Esophagus muscularis mucosa (tissue), 4 donors: ENCODE measurements at regions of chr3 and their contacts with region 1.

Region 1: DNA sequence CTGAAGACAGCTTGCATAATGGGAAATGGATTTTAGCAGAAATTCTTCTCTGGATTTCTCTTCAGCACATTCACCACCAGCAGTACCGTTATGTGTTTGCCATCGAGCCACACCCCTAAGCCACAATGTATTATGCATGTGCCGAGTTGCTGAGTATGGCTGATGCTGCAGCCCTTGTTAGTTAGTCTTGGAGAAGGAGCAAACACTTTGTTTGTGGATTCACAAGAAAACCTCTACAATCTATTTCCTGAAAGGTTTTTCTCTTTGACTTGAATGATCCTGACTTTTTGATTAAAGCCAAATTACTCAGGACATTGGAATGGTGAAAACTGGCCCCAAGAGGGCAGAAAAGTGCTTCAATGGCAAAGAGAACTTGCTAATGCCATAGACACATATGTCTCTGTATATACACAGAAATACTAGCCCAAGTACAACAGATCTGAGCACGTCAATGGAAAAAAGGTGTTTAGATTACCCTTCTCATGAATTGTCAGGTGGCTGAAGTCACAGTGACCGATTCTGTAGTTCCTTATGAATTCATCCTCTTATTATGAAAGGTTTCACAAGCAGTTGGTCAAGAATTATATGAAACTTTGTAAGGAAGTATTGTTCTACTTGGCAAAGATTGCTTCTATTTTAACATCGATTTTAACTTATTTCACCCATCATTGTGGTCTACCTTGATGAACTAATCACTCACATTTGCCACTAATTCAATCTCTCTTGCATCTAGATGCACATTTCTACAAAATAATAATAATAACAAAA is 103.0 kb downstream of the P3H2 start:
- DNase-seq: no peak
- H3K4me3 ChIP-seq: no peak overlapping the region
- H3K27ac ChIP-seq: no peak overlapping the region
- H3K4me1 ChIP-seq: peaks cover 12 to 18% (median 16%) of the 10 kb centered on the region in 4 donors
- H3K27me3 ChIP-seq: no peaks in the 10 kb centered on the region
- CTCF ChIP-seq: peak; percentile 40 to 46 (median 43)
- EP300 ChIP-seq: no peak
- POLR2A ChIP-seq: no peak

Region 2: GRCh38 chr3:189967254-189967865 is 50.3 kb before region 1 on chr3:
- intact Hi-C with region 1: loop called (anchors 5 kb)
- DNase-seq: no peak
- H3K4me3 ChIP-seq: no peak overlapping the region
- H3K27ac ChIP-seq: no peak overlapping the region
- H3K4me1 ChIP-seq: peaks cover 0 to 2% (median under 1%) of the 10 kb centered on the region in 4 donors
- H3K27me3 ChIP-seq: no peaks in the 10 kb centered on the region
- CTCF ChIP-seq: peak; percentile 80 to 91 (median 84)
- EP300 ChIP-seq: no peak
- POLR2A ChIP-seq: no peak

Region 3: DNA sequence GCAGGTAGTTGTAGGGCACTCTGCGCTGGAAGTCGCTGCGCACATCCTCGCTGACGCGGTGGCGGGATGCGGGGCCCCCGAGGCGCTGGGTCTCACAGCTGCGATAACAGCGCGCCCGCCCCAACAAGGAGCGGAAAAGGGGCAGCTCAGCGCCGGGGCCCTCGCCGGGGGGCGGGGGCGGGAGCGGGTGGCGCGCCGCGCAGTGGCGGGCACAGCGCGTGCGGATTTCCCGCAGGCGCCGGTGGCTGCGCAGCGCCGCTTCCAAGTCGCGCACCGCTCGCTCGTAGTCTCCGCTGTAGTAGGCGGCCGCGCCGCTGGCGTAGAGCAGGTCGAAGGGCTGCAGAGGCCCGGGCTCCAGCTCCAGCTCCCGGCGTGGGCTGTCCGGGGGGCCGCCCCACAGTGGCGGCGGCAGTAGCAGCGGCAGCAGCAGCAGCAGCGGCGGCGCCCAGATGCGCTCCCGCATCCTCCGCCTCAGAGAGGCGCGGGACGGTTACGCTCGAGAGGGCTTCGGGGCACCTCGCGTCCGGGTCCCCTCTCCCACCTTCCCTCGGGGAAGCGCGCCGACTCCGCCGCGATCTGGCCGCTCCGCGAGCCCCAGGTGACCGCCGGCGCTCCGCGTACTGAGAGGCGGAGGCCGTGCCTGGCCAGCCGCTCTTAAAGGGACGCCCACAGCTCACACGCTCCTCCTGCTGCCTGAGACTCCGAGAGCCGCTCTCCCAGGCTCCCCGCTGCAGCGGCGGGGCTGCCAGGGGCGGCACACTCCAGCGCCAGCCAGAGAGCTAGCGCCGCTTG is 102.8 kb after region 1 on chr3 and contains the start of gene P3H2:
- intact Hi-C with region 1: loop called (anchors 5 kb)
- DNase-seq: peak; percentile 93
- H3K4me3 ChIP-seq: peak within 1 kb of the TSS; percentile 73 to 92 (median 77)
- H3K27ac ChIP-seq: peak within 1 kb of the TSS; percentile 85 to 94 (median 90)
- H3K4me1 ChIP-seq: peaks cover 10 to 55% (median 43%) of the 10 kb centered on the region in 4 donors
- H3K27me3 ChIP-seq: no peaks in the 10 kb centered on the region
- CTCF ChIP-seq: peak; percentile 55 to 71 (median 70)
- EP300 ChIP-seq: no peak
- POLR2A ChIP-seq: no peak
- total RNA-seq, gene P3H2: 15.6 to 41.5 (median 27.1) TPM

Region 4: GRCh38 chr3:190205739-190206138 is 188.0 kb after region 1 on chr3:
- intact Hi-C with region 1: loop called (anchors 5 kb)
- DNase-seq: no peak
- H3K4me3 ChIP-seq: no peak overlapping the region
- H3K27ac ChIP-seq: no peak overlapping the region
- H3K4me1 ChIP-seq: no peaks in the 10 kb centered on the region
- H3K27me3 ChIP-seq: no peaks in the 10 kb centered on the region
- CTCF ChIP-seq: no peak
- EP300 ChIP-seq: no peak
- POLR2A ChIP-seq: no peak